ENCODE measurements at regions of chr15 and their contacts with region 1.

Region 1: GRCh38 chr15:91032919-91033803 is 10.8 kb upstream of the VPS33B start:
- DNase-seq: peak; percentile 79
- H3K4me3 Mint-ChIP-seq: no peak overlapping the region
- H3K27ac Mint-ChIP-seq: no peak overlapping the region
- H3K4me1 Mint-ChIP-seq: peaks cover 4% of the 10 kb centered on the region
- H3K27me3 Mint-ChIP-seq: peaks cover 42% of the 10 kb centered on the region

Region 2: DNA sequence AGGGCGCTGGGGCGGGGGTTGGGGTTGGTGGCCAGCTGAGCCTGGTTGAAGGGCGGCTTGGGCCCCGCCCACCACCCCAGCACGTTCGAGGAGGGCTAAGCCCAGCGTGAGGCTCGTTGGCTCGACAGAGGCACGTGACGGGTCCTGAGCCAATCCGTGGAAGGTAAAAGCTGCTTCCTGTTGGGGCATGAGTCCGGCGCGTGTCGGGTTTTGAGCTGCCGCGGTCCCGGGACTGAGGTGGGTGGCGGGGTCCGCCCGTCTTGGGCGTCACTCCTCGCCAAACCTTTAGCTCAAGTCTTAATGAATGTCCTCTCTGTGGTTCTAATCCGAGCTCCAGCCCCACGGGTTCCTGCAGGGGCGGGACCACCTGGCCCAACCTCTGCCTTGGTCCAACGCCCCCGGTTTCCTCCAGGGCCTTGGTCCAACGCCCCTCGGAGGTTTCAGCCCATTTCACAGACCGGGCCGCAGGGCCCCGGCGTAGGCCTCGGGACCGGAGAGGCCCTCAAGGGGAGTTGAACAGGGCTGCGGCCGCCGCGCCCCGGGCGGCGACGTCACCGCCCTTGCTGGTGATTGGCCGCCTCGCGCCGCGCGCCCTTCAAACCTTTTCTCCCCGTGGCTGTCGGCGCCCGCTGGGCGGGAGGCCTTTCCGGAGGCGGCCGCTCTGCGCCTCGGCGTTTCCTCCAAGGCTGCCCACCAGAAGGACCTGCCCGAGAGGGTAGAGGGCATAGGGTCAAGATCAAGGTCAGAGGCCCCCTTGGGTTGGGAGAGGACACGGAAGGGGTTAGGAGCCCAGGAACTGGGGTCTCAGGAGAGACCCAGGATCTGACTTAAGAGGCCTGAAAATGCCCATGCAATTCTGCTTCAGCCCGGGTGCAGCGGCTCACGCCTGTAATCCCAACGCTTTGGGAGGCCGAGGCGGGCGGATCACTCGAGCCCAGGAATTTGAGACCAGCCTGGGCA is 78.2 kb before region 1 on chr15 and contains the start of gene RCCD1:
- CTCF ChIA-PET with region 1: interaction called, 31 read pairs
- DNase-seq: peak; percentile 96
- H3K4me3 Mint-ChIP-seq: peak within 1 kb of the TSS; percentile 85
- H3K27ac Mint-ChIP-seq: peak within 1 kb of the TSS; percentile 96
- H3K4me1 Mint-ChIP-seq: peaks cover 27% of the 10 kb centered on the region
- H3K27me3 Mint-ChIP-seq: no peaks in the 10 kb centered on the region

Region 3: DNA sequence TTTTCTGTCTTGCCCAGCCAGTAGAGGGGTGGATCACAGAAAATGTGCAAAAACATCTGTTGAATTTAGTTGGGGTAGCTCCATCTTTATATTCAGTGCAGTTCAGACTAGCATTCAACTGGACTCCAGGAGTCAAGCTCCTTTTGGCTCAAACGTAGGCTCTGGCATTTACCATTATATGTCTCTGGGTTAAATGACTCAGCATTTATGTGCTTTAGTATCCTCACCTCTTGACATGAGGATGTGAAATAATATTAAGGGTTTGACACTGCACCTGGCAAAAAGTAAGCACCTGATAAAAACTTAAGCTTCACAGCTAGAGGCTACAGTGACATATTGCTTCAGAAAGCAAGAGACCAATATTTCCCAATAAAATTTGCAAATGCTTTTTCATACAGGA is 53.6 kb before region 1 on chr15:
- CTCF ChIA-PET with region 1: interaction called, 11 read pairs
- DNase-seq: no peak
- H3K4me3 Mint-ChIP-seq: no peak overlapping the region
- H3K27ac Mint-ChIP-seq: peak overlapping the region; percentile 20
- H3K4me1 Mint-ChIP-seq: peaks cover 19% of the 10 kb centered on the region
- H3K27me3 Mint-ChIP-seq: no peaks in the 10 kb centered on the region

Region 4: DNA sequence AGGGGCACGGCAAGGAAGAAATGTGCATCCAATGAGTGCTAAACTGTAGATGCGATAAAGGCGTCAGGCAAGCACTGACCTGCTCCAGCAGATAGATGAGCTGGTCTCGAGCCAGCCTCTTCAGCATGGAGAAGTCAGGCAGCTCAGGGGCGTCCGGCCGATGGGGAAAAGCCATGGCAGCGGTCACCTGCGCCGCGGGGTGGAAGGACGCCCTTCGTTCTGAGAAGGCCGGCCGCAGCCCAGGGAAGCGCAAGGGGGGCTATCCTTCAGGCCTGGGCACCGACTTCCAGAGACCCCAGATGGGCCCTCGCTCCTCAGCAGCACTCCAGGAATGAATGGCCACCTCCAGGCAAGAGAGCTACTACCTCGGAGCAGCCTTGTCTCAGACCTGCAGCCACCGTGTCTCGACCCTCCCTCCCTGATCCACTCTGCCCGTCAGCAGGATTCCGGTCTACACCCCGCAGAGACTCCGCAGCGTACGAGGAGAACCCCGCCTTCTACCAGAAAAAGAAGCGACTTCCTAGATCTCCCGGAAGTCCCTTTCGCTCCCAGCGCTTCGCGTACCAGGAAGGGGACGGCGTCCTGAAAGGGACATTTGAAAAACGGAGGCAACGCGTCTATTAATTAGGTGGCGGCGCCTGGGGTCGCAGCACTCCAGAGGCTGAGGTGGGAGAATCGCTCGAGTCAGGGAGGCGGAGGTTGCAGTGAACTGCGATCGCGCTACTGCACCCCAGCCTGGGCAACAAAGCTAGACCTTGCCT is 10.9 kb before region 1 on chr15 and contains the start of gene VPS33B:
- CTCF ChIA-PET with region 1: interaction called, 30 read pairs
- DNase-seq: peak; percentile 87
- H3K4me3 Mint-ChIP-seq: peak within 1 kb of the TSS; percentile 89
- H3K27ac Mint-ChIP-seq: peak within 1 kb of the TSS; percentile 85
- H3K4me1 Mint-ChIP-seq: peaks cover 47% of the 10 kb centered on the region
- H3K27me3 Mint-ChIP-seq: no peaks in the 10 kb centered on the region

Region 5: DNA sequence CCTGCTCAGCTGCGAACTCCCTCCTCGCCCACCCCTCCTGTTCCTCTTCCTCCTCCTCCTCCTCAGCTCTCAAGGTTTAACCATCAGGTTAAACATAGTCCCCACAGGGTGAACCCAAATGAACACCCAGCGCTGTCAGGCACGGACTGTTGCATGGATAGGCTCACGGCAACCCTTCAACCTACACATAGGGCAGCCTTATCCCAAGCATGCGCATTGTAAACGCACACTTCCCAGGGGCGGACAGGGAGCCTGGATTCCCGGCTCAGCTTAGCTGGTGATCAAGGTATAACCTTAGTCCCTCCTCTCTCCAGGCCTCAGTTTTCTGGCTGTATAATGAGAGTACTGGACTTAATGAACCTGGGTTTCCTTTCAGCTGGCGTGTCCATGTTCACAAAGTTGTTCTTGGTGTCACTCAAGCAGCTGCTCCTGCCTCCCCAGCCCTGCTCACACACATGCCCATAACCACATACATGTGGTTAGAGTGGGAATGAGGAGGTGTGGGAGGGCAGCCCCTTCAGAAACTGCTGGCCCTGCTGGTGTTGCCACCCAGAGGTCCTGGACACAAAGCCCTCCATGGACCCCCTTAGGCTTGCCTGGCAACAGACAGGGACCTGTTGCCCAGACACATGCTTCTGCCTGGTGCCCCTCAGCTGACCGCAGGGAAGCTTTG is 10.2 kb after region 1 on chr15:
- CTCF ChIA-PET with region 1: interaction called, 11 read pairs
- DNase-seq: no peak
- H3K4me3 Mint-ChIP-seq: no peak overlapping the region
- H3K27ac Mint-ChIP-seq: no peak overlapping the region
- H3K4me1 Mint-ChIP-seq: peaks cover 15% of the 10 kb centered on the region
- H3K27me3 Mint-ChIP-seq: peaks cover 19% of the 10 kb centered on the region